GM13977 (cell line): ENCODE measurements at regions of chr12 and their contacts with region 1.

Region 1: DNA sequence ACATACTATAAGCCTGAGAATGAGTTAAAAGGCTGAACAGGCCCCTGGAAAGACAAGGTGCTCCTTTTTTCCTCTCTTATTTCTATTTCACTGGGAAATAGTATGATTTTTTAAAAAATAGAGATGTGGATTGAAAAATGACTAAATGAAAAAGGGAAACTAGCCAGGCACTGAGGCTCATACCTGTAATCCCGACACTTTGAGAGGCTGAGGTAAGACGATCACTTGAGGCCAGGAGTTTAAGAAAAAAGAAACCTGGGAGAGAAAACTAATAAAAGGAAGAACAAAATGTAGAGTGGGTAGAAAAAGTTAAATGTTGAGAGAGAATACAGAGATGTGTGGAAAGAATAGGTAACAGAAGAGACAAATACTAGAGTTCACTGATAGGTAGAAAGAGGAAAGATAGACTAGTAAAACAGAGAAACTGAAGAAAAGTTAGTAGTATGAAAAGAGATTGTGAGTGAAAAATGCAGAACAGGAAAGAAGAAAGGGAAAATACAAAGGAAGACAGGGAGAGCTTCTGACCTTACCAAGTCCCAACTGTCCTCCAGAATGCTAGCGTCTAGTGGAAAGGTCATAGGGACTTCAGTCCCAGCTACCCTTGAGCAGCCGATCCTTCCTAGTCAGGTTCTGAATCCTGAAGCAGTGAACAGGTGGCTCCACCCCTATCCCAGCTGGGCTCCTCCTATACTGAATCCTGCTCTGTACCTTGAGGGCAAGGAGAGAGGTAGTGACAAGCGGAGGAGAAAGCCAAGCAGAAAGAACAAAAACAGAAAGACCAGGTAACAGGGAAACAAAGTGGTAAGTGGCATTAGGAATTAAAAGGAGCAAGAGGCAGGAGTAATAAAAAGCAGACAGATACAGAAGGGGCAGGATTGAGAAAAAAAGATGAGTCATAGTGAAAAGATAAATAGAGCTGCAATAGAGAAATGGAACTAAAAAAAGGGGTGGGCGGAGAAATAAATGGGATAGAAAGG is 7.3 kb downstream of the TMEM116 start:
- DNase-seq: no peak
- CTCF ChIP-seq: no peak

Region 2: DNA sequence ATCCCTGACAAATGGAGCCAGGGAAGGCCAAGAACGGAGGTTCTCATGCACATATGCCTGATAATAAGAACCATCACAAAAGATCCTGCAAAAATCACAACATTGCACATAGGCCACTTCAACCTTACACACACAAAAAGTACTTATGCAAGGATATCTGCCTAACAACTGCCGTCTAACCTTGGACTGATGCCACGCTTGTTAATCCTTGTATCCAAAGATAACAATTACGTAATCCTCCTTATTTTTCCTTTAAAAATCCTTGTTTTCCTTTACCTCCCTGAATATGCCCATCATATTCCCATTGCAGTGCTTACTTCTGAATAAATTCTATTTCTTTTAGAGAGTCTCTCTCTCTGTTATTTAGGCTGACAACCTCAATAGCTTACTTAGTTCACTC is 52.3 kb before region 1 on chr12:
- in situ Hi-C with region 1: loop called (anchors 10 kb)
- DNase-seq: no peak
- CTCF ChIP-seq: no peak